Breast epithelium (tissue), 4 donors: ENCODE measurements at regions of chr15 and their contacts with region 1.

Region 1: GRCh38 chr15:34179234-34179633 is 30.7 kb downstream of the KATNBL1 start:
- DNase-seq: no peak
- H3K4me3 ChIP-seq: no peak overlapping the region
- H3K27ac ChIP-seq: no peak overlapping the region
- H3K4me1 ChIP-seq: no peaks in the 10 kb centered on the region
- H3K27me3 ChIP-seq: no peaks in the 10 kb centered on the region
- CTCF ChIP-seq: no peak
- POLR2A ChIP-seq: no peak

Region 2: GRCh38 chr15:33188641-33189257 is 990.5 kb before region 1 on chr15:
- intact Hi-C with region 1: loop called (anchors 10 kb)
- DNase-seq: no peak
- H3K4me3 ChIP-seq: no peak overlapping the region
- H3K27ac ChIP-seq: no peak overlapping the region
- H3K4me1 ChIP-seq: no peaks in the 10 kb centered on the region
- H3K27me3 ChIP-seq: peaks cover 0 to 3% of the 10 kb centered on the region in 2 donors
- CTCF ChIP-seq: no peak
- POLR2A ChIP-seq: no peak